Prostate gland (tissue), 2 donors: ENCODE measurements at regions of chr9 and their contacts with region 1.

Region 1: GRCh38 chr9:5437254-5438216 is at the start of gene PLGRKT:
- DNase-seq: peak; percentile 93
- H3K4me3 ChIP-seq: peak within 1 kb of the TSS; percentile 61 to 71
- H3K27ac ChIP-seq: peak within 1 kb of the TSS; percentile 87 to 88
- H3K4me1 ChIP-seq: peaks cover 2% of the 10 kb centered on the region
- H3K27me3 ChIP-seq: no peaks in the 10 kb centered on the region
- CTCF ChIP-seq: peak in 1 of 4 experiments; percentile 34
- POLR2A ChIP-seq: peak; percentile 84
- total RNA-seq, gene PLGRKT: 10.4 to 49.6 TPM

Region 2: GRCh38 chr9:4762108-4762885 is 675.2 kb before region 1 on chr9:
- intact Hi-C with region 1: loop called (anchors 10 kb)
- DNase-seq: peak; percentile 76
- H3K4me3 ChIP-seq: no peak overlapping the region
- H3K27ac ChIP-seq: no peak overlapping the region
- H3K4me1 ChIP-seq: no peaks in the 10 kb centered on the region
- H3K27me3 ChIP-seq: no peaks in the 10 kb centered on the region
- CTCF ChIP-seq: peak; percentile 54 to 88 (median 86)
- POLR2A ChIP-seq: no peak

Region 3: DNA sequence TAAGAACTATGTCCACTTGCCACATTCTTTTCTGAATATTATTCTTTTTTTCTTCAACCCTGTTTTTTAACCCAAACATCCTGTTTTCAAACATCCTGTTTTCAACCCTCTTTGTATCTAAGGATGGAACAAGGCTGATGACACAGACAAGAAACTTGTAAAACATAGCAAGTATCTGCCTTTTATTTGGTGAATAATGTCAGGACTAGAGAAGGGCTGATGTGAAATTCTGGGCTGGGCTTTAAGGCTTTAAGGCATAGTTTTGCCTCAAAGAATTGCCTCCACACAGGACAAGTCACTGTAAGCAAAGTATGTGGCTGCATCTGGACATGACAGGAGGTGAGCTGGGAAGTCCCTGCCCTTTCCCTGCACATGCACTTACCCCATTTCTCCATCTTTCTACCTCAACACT is 148.9 kb after region 1 on chr9:
- intact Hi-C with region 1: loop called (anchors 5 kb)
- DNase-seq: no peak
- H3K4me3 ChIP-seq: no peak overlapping the region
- H3K27ac ChIP-seq: no peak overlapping the region
- H3K4me1 ChIP-seq: no peaks in the 10 kb centered on the region
- H3K27me3 ChIP-seq: no peaks in the 10 kb centered on the region
- CTCF ChIP-seq: no peak
- POLR2A ChIP-seq: no peak